PC-3 (cell line): ENCODE measurements at regions of chr21 and their contacts with region 1.

Region 1: GRCh38 chr21:23853796-23854379 is 1753.4 kb downstream of the MRPL39 start:
- DNase-seq: peak; percentile 63
- ATAC-seq: peak; percentile 94
- H3K4me3 ChIP-seq: no peak overlapping the region
- H3K27ac ChIP-seq: no peak overlapping the region
- H3K4me1 ChIP-seq: no peaks in the 10 kb centered on the region
- H3K27me3 ChIP-seq: no peaks in the 10 kb centered on the region
- CTCF ChIP-seq: peak; percentile 75

Region 2: GRCh38 chr21:23780326-23780725 is 73.6 kb before region 1 on chr21:
- CTCF ChIA-PET with region 1: no interaction called
- POLR2A ChIA-PET with region 1: no interaction called
- intact Hi-C with region 1: no loop called
- DNase-seq: no peak
- ATAC-seq: no peak
- H3K4me3 ChIP-seq: no peak overlapping the region
- H3K27ac ChIP-seq: no peak overlapping the region
- H3K4me1 ChIP-seq: no peaks in the 10 kb centered on the region
- H3K27me3 ChIP-seq: no peaks in the 10 kb centered on the region
- CTCF ChIP-seq: no peak

Region 3: GRCh38 chr21:24076179-24076578 is 222.3 kb after region 1 on chr21:
- CTCF ChIA-PET with region 1: no interaction called
- POLR2A ChIA-PET with region 1: no interaction called
- intact Hi-C with region 1: loop called (anchors 5 kb)
- DNase-seq: peak; percentile 20
- ATAC-seq: no peak
- H3K4me3 ChIP-seq: no peak overlapping the region
- H3K27ac ChIP-seq: no peak overlapping the region
- H3K4me1 ChIP-seq: no peaks in the 10 kb centered on the region
- H3K27me3 ChIP-seq: no peaks in the 10 kb centered on the region
- CTCF ChIP-seq: peak; percentile 41; the same call in 1 of the 2 replicates